ENCODE measurements at regions of chr9 and their contacts with region 1.

Region 1: DNA sequence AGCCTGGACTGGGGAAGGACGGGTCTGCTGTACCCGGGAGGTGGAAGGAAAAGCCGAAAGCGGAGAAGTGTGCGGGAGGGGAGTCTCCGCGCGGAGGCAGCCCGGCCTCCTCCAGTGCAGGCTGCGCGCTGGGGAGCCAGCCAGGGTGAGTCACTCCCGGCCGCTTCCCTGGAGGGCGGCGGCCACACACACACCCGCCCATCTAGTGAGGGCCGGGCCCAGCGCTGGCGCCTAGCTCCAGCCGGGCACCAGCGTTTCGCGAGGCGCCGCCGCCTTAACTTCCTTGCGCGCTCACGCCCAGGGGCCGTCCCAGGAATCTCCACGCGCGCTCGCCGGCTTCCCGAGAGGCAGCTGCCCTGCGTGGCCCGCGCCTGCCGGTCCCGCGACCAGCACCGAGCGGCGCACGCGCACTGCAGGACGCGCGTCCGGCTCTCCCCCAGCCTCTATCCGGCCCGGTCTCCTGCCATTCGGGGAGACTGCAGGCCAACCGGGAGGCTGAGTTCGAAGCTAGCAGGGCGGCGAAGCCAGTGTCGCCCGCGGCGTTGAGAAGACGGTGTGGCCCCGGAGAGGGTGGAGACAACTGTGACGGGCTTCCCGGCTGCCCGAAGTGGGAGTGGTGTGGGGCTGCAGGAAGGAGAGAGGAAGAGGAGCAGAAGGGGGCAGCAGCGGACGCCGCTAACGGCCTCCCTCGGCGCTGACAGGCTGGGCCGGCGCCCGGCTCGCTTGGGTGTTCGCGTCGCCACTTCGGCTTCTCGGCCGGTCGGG is at the start of gene JAK2:
- DNase-seq: peak; percentile 93
- ATAC-seq: peak; percentile 88
- H3K4me3 Mint-ChIP-seq: peak within 1 kb of the TSS; percentile 96
- H3K27ac Mint-ChIP-seq: peak within 1 kb of the TSS; percentile 97
- H3K4me1 Mint-ChIP-seq: peaks cover 48% of the 10 kb centered on the region
- H3K27me3 Mint-ChIP-seq: no peaks in the 10 kb centered on the region
- total RNA-seq, gene JAK2: 25.7 to 27.2 TPM

Region 2: DNA sequence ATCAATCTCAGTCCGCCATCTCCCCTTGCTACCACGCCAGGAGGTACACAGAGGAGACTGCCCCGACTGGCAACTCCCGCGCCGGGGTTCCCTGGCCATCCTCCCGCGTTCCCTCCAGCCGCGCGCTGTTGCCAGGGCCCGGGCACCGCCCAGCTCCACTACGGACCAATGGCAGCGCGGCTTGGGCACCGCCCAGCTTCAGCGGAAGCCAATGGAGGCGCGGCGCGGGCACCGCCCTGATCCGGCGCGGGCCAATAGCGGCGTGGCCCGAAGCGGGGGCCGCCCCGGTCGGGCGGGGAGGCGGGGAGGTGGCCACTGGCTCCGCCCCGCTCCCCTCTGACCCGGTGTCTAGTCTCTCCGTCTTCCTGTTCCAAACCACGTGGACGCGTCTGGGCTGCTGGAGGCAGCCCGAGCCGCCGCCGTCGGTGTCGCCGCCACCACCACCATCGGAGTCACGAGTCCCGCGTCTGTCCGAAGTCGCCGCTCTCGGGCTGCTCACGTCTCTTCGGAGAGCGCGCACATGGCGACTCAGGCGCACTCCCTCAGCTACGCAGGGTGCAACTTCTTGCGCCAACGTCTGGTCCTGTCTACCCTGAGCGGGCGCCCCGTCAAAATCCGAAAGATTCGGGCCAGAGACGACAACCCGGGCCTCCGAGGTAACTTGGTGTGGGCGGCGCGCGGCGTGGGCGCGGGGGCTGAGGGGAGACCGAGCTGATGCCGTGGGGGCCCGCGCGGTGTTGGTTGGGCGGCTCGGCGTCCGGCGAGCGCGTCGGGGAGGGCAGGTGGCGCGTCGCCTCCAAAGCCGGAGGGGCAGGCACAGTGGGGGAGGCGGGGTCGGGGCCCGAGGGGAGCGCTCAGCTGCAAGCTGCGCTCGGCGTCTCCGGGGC is 192.0 kb before region 1 on chr9 and contains the start of gene RCL1:
- CTCF ChIA-PET with region 1: interaction called, 29 read pairs
- POLR2A ChIA-PET with region 1: interaction called, 20 read pairs
- DNase-seq: peak; percentile 97
- ATAC-seq: peak; percentile 98
- H3K4me3 Mint-ChIP-seq: peak within 1 kb of the TSS; percentile 95
- H3K27ac Mint-ChIP-seq: peak within 1 kb of the TSS; percentile 94
- H3K4me1 Mint-ChIP-seq: peaks cover 33% of the 10 kb centered on the region
- H3K27me3 Mint-ChIP-seq: peaks cover 9% of the 10 kb centered on the region
- total RNA-seq, gene RCL1: 16.8 TPM

Region 3: GRCh38 chr9:4849364-4849763 is 135.4 kb before region 1 on chr9:
- CTCF ChIA-PET with region 1: interaction called, 20 read pairs
- POLR2A ChIA-PET with region 1: no interaction called
- DNase-seq: no peak
- ATAC-seq: no peak
- H3K4me3 Mint-ChIP-seq: no peak overlapping the region
- H3K27ac Mint-ChIP-seq: no peak overlapping the region
- H3K4me1 Mint-ChIP-seq: peaks cover 3% of the 10 kb centered on the region
- H3K27me3 Mint-ChIP-seq: no peaks in the 10 kb centered on the region

Region 4: GRCh38 chr9:4923580-4924544 is 60.9 kb before region 1 on chr9:
- CTCF ChIA-PET with region 1: interaction called, 34 read pairs
- POLR2A ChIA-PET with region 1: interaction called, 4 read pairs
- DNase-seq: peak; percentile 50
- ATAC-seq: peak; percentile 70
- H3K4me3 Mint-ChIP-seq: no peak overlapping the region
- H3K27ac Mint-ChIP-seq: peak overlapping the region; percentile 47
- H3K4me1 Mint-ChIP-seq: peaks cover 15% of the 10 kb centered on the region
- H3K27me3 Mint-ChIP-seq: no peaks in the 10 kb centered on the region

Region 5: DNA sequence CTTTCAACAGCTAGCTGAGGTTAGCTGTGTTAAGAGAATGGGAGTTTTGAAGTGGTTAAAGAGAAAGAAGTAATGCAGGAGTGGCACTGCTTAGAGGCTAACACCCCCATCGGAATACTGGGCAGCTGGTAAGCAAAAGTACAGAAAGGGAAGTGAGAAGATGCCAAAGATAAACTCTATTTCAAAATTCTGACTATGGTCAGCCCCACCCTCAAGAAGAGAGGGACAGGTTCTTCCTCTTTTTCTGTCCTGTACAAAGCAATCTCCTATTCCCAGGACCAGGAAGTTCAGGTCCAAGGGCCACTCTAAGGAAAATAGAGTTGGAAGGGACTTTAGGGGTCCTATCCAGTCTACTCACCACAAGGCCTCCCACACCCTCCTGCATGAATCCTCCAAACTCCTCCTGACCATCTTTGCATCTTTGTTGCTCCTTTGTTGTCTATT is 45.7 kb before region 1 on chr9:
- CTCF ChIA-PET with region 1: interaction called, 20 read pairs
- POLR2A ChIA-PET with region 1: interaction called, 58 read pairs
- DNase-seq: peak; percentile 37
- ATAC-seq: peak; percentile 88
- H3K4me3 Mint-ChIP-seq: peak overlapping the region; percentile 47
- H3K27ac Mint-ChIP-seq: peak overlapping the region; percentile 56
- H3K4me1 Mint-ChIP-seq: peaks cover 79% of the 10 kb centered on the region
- H3K27me3 Mint-ChIP-seq: no peaks in the 10 kb centered on the region

Region 6: DNA sequence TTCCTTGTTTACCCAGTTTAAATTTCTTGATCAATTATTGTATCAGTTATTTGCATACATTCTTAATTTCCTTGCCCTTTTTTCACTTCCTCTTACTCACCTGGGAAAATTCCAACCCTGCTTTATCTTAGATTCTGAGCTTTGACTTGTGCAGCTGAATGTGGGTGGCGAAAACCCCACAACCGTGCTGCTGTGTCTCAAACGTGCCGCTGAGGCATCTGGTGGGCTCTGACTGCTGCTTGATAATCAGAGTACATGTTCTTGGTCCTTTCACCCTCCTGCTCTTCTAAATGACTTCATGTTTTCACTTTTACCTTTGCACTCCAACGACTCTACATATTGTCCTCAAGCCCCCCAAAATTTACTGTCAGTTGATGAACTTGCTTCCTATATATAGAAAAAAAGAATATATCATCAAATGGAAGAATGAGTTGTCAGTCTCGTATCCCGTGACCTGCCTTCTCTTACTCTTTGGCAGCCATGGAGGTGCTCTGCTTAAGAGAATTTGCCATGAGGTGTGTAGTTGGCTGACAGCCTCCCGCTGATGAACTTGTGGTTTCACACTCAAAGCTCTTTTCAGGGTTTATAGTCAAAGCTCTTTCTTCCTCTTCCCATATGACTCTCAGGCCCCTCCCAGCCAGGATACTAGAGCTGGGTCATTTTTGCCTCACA is 13.7 kb before region 1 on chr9:
- CTCF ChIA-PET with region 1: interaction called, 18 read pairs
- POLR2A ChIA-PET with region 1: interaction called, 18 read pairs
- DNase-seq: peak; percentile 73
- ATAC-seq: peak; percentile 88
- H3K4me3 Mint-ChIP-seq: no peak overlapping the region
- H3K27ac Mint-ChIP-seq: no peak overlapping the region
- H3K4me1 Mint-ChIP-seq: peaks cover 32% of the 10 kb centered on the region
- H3K27me3 Mint-ChIP-seq: no peaks in the 10 kb centered on the region

Region 7: GRCh38 chr9:5008202-5008601 is 23.4 kb after region 1 on chr9:
- CTCF ChIA-PET with region 1: no interaction called
- POLR2A ChIA-PET with region 1: no interaction called
- DNase-seq: no peak
- ATAC-seq: no peak
- H3K4me3 Mint-ChIP-seq: no peak overlapping the region
- H3K27ac Mint-ChIP-seq: no peak overlapping the region
- H3K4me1 Mint-ChIP-seq: peaks cover 17% of the 10 kb centered on the region
- H3K27me3 Mint-ChIP-seq: no peaks in the 10 kb centered on the region

Region 8: GRCh38 chr9:5178126-5178805 is 193.5 kb after region 1 on chr9:
- CTCF ChIA-PET with region 1: no interaction called
- POLR2A ChIA-PET with region 1: no interaction called
- DNase-seq: peak; percentile 62
- ATAC-seq: peak; percentile 92
- H3K4me3 Mint-ChIP-seq: no peak overlapping the region
- H3K27ac Mint-ChIP-seq: peak overlapping the region; percentile 62
- H3K4me1 Mint-ChIP-seq: peaks cover 18% of the 10 kb centered on the region
- H3K27me3 Mint-ChIP-seq: no peaks in the 10 kb centered on the region

Region 9: GRCh38 chr9:5976674-5977397 is 992.0 kb after region 1 on chr9:
- CTCF ChIA-PET with region 1: no interaction called
- POLR2A ChIA-PET with region 1: no interaction called
- DNase-seq: no peak
- ATAC-seq: peak; percentile 57
- H3K4me3 Mint-ChIP-seq: no peak overlapping the region
- H3K27ac Mint-ChIP-seq: peak overlapping the region; percentile 70
- H3K4me1 Mint-ChIP-seq: peaks cover 11% of the 10 kb centered on the region
- H3K27me3 Mint-ChIP-seq: no peaks in the 10 kb centered on the region